Activated CD4-positive, alpha-beta T cell treated with anti-CD3 and anti-CD28 coated beads for 36 hours (primary cell): ENCODE measurements at regions of chr9 and their contacts with region 1.

Region 1: DNA sequence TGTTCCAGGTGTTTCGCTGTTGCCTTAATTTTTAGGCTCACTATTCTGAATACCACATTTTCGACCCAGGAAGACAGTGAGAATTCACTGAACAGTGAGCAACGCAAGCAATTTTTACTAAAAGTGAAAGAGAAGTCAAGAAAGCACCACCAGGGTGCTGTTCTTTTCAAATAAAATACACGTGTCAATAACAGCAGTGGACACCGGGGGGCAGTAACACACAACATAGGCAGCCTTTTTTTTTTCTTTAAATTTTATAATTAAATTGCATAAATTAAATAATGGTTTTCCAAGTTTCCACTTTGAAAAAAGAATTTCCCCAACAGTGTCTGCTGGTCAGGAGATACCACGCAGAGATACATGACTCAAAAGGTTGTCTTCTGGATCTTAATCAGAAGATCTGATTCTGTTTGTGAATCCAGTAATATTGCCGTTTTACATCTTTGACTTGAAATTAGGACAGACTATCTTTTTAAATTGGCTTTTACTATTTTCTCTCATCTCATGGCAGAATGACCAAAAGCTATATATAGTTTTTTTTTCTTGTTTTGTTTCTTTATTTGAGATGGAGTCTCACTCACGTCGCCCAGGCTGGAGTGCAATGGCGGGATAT is 47.1 kb upstream of the SH3GL2 start:
- DNase-seq: peak; percentile 61
- ATAC-seq: no peak
- H3K4me3 Mint-ChIP-seq: no peak overlapping the region
- H3K27ac Mint-ChIP-seq: no peak overlapping the region
- H3K4me1 Mint-ChIP-seq: no peaks in the 10 kb centered on the region
- H3K27me3 Mint-ChIP-seq: no peaks in the 10 kb centered on the region

Region 2: DNA sequence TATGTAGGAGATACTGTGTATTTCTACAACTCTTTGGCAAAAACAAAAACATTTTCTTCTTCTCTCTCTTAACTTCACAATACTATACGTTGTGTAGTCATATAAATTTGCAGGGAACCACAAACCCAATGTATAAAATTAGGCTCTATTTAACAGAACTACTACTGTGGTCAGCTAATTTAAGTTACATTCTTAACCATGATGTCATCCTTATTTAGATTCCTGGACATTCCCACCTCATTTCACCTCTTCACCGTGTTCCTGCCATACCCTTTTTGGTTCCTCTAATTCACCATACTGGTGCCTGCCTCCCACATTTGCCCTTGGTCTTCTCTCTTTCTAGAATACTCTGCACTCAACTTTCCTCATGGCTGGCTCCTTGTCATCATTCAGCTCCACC is 28.6 kb before region 1 on chr9:
- CTCF ChIA-PET with region 1: no interaction called
- POLR2A ChIA-PET with region 1: no interaction called
- intact Hi-C with region 1: no loop called
- DNase-seq: no peak
- ATAC-seq: no peak
- H3K4me3 Mint-ChIP-seq: no peak overlapping the region
- H3K27ac Mint-ChIP-seq: no peak overlapping the region
- H3K4me1 Mint-ChIP-seq: no peaks in the 10 kb centered on the region
- H3K27me3 Mint-ChIP-seq: no peaks in the 10 kb centered on the region

Region 3: GRCh38 chr9:17802249-17802857 is 270.6 kb after region 1 on chr9:
- CTCF ChIA-PET with region 1: no interaction called
- POLR2A ChIA-PET with region 1: no interaction called
- intact Hi-C with region 1: loop called (anchors 2 to 5 kb)
- DNase-seq: no peak
- ATAC-seq: no peak
- H3K4me3 Mint-ChIP-seq: no peak overlapping the region
- H3K27ac Mint-ChIP-seq: no peak overlapping the region
- H3K4me1 Mint-ChIP-seq: no peaks in the 10 kb centered on the region
- H3K27me3 Mint-ChIP-seq: no peaks in the 10 kb centered on the region

Region 4: GRCh38 chr9:18023332-18023731 is 491.6 kb after region 1 on chr9:
- CTCF ChIA-PET with region 1: no interaction called
- POLR2A ChIA-PET with region 1: no interaction called
- intact Hi-C with region 1: no loop called
- DNase-seq: no peak
- ATAC-seq: no peak
- H3K4me3 Mint-ChIP-seq: no peak overlapping the region
- H3K27ac Mint-ChIP-seq: no peak overlapping the region
- H3K4me1 Mint-ChIP-seq: no peaks in the 10 kb centered on the region
- H3K27me3 Mint-ChIP-seq: no peaks in the 10 kb centered on the region

Region 5: GRCh38 chr9:18208154-18209059 is 676.7 kb after region 1 on chr9:
- CTCF ChIA-PET with region 1: interaction called, 3 read pairs
- POLR2A ChIA-PET with region 1: no interaction called
- intact Hi-C with region 1: loop called in 1 of 2 experiments (anchors 2 kb)
- DNase-seq: peak; percentile 8
- ATAC-seq: no peak
- H3K4me3 Mint-ChIP-seq: no peak overlapping the region
- H3K27ac Mint-ChIP-seq: no peak overlapping the region
- H3K4me1 Mint-ChIP-seq: no peaks in the 10 kb centered on the region
- H3K27me3 Mint-ChIP-seq: peaks cover 6% of the 10 kb centered on the region